Kidney (tissue), 22 donors: ENCODE measurements at regions of chr10 and their contacts with region 1.

Region 1: DNA sequence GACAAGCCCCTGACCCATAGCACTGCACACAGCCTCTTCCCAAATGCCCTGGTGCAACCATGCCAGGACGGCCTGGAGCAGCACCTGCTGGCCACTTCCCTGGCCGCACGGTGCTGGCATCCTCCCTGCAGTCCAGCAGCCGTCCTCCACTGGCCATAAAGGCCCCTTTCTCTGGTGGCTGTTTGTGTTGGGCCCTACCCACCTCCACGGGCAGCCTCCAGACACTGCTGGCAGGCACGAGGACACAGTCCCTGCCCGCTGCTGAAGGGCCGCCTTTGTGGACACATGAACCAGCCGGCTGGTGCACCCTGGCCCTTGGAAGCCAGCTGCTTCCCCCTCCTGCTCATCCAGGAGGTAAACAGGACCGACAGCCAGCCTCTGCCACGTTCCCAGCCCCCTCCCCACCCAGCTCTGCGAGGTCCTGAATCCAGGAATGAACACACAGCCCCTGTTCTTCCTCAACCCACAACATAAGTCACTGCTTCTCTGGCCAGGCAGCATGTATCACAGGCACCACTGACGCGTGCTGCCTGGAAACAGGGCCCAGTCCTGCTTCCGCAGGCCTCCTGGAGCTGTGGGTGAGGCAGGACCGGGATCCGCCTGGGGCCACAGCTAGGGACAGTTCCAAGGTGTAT is 43.8 kb downstream of the SPOCK2 start:
- DNase-seq: peak in 3 of 5 donors; percentile 36 to 80 (median 49)
- H3K4me3 ChIP-seq: no peak overlapping the region
- H3K27ac ChIP-seq: no peak overlapping the region
- H3K4me1 ChIP-seq: peaks cover 0 to 12% (median 0%) of the 10 kb centered on the region in 3 donors
- H3K27me3 ChIP-seq: no peaks in the 10 kb centered on the region
- CTCF ChIP-seq: peak; percentile 24

Region 2: DNA sequence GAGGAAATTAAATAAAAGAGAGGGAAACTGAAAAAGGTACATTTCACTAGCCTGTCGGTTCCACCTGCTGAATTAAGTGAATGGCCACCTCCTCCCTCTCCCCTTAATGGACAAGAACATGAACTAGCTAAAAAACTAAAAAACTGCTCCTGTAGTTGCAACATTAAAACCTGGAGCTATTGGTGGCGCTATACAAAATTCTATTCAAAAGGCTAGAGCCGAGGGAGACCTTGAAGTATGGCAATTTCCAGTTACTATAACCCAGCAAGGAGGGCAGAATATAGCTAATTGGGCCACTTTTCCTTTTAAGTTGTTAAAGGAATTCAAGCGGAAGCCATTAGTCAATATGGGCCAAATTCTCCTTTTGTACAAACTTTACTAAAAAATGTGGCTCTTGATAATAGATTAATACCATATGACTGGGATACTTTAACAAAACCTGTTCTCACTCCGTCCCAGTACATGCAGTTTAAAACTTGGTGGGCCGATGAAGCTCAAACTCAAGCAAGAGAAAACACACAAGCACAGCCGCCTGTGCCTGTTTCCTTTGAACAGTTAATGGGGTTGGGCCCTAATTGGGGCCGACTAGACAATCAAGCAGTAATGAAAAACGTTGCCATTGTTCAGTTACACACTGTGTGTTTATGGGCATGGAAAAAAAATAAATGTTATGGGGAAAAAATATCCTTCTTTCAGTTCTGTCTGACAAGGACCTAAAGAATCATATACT is 86.8 kb before region 1 on chr10:
- intact Hi-C with region 1: loop called (anchors 5 kb)
- DNase-seq: peak in 1 of 5 donors; percentile 5
- H3K4me3 ChIP-seq: no peak overlapping the region
- H3K27ac ChIP-seq: no peak overlapping the region
- H3K4me1 ChIP-seq: no peaks in the 10 kb centered on the region
- H3K27me3 ChIP-seq: no peaks in the 10 kb centered on the region
- CTCF ChIP-seq: no peak